ENCODE measurements at regions of chr16 and their contacts with region 1.

Region 1: DNA sequence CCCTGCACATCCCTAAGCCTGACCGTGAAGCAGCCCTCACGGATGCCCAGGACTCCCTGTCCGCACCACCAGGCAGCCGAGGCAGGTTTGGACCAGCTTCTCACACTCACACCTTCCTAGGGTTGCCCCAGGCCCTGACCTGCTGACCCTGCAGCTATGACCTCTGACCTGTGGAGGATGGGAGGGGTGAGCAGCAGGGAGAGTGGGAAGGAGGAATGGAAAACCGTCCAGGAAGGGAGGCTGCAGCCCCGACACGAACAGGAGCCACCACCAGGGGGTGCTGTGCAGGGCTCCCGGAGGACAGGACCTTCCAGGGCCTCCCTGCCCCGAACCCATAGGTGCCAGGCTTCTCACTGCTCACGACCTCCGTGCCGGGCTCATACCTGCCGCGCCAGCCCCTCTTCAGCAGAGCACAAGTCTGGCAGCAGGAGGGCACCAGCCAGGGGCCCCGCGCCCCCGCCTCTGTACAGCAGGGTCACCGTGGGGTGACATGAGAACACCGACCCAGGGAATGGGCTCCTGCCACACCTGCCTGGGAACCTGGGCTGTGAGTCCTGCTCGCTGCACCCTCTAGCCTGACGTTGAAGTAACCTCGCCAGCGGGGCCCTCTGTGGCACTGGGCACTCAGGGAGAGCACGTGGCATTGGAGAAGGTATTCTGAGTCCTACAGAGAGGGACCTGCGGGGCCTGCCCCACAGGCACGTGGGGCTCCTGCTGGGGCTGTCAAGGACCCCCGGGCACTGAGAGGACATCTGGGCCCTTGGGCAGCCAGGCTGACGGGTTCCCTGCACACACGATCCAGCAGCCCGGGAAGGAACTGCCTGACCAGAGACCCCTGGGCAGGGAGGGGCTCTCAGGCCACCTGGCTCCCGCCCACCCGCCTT is 37.6 kb downstream of the CTU2 start:
- DNase-seq: peak; percentile 79
- ATAC-seq: peak; percentile 22
- H3K4me3 Mint-ChIP-seq: no peak overlapping the region
- H3K27ac Mint-ChIP-seq: no peak overlapping the region
- H3K4me1 Mint-ChIP-seq: peaks cover 24% of the 10 kb centered on the region
- H3K27me3 Mint-ChIP-seq: no peaks in the 10 kb centered on the region
- CTCF ChIP-seq: peak; percentile 95

Region 2: DNA sequence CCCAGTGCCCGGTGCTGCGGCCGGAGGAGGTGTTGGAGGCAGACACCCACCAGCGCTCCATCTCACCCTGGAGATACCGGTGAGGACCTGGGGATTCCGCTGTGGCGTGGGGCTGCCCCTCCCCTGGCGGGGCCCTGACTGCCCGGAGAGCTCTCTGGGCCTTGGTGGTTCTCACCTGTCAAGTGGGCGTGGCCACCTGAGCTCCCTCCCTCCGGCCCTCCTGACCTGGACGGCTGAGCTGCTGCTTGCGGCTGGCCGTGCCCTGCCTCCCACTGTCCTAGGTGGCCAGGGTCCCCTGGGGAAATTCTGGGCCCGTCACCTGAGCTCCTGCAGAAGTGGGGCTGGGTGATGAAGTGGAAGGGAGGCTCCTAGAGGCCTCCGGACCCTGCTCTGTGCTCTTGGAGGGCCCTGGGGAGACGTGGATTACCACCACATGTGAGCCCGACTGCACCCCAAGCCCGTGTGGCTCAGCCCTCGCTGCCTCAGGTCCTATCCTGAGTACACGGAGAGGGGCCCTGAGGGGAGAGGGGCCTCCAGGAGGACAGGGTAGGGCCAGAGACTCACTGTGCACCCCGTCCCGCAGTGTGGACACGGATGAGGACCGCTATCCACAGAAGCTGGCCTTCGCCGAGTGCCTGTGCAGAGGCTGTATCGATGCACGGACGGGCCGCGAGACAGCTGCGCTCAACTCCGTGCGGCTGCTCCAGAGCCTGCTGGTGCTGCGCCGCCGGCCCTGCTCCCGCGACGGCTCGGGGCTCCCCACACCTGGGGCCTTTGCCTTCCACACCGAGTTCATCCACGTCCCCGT is 104.5 kb before region 1 on chr16:
- CTCF ChIA-PET with region 1: no interaction called
- POLR2A ChIA-PET with region 1: no interaction called
- intact Hi-C with region 1: no loop called
- DNase-seq: peak; percentile 31
- ATAC-seq: no peak
- H3K4me3 Mint-ChIP-seq: no peak overlapping the region
- H3K27ac Mint-ChIP-seq: no peak overlapping the region
- H3K4me1 Mint-ChIP-seq: peaks cover 33% of the 10 kb centered on the region
- H3K27me3 Mint-ChIP-seq: peaks cover 20% of the 10 kb centered on the region
- CTCF ChIP-seq: no peak

Region 3: DNA sequence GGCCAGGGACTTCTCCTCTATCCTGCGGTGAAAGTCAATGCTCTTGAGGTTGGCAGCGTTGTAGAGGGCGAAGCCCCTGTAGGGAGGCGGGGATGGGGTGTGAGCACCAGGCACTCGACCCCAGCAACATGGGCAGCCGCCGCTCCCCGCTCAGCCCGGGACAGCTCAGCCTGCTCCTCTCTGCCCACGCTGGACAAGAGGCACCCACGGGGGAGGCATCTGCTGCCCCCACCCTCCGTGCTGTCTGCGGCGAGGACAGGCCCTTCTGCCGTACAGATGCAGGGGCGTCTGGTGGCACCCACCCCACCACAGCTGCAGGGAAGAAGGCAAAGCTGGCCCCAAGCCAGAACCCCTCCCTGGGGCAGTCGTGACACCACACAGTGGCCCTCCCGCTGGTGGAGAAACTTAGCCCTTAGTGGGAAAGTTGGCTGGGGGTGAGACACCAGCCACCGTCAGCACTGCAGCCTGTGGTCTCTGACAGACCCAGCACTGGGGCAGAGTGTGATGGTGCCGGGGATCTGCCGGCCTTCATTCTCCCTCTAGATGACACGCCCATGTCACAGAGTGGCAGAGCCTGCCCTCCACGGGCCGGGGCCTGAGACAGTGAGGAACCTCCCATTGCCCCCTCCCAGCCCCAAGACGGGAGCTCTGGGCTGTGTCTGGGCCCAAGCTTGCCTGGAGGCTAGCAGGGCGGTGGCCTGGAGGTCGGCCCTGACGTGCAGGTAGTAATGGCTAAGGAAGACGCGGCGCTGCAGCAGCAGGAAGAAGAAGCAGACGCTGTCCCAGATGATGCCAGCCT is 18.1 kb before region 1 on chr16:
- CTCF ChIA-PET with region 1: no interaction called
- POLR2A ChIA-PET with region 1: no interaction called
- intact Hi-C with region 1: no loop called
- DNase-seq: no peak
- ATAC-seq: no peak
- H3K4me3 Mint-ChIP-seq: no peak overlapping the region
- H3K27ac Mint-ChIP-seq: no peak overlapping the region
- H3K4me1 Mint-ChIP-seq: no peaks in the 10 kb centered on the region
- H3K27me3 Mint-ChIP-seq: no peaks in the 10 kb centered on the region
- CTCF ChIP-seq: no peak

Region 4: DNA sequence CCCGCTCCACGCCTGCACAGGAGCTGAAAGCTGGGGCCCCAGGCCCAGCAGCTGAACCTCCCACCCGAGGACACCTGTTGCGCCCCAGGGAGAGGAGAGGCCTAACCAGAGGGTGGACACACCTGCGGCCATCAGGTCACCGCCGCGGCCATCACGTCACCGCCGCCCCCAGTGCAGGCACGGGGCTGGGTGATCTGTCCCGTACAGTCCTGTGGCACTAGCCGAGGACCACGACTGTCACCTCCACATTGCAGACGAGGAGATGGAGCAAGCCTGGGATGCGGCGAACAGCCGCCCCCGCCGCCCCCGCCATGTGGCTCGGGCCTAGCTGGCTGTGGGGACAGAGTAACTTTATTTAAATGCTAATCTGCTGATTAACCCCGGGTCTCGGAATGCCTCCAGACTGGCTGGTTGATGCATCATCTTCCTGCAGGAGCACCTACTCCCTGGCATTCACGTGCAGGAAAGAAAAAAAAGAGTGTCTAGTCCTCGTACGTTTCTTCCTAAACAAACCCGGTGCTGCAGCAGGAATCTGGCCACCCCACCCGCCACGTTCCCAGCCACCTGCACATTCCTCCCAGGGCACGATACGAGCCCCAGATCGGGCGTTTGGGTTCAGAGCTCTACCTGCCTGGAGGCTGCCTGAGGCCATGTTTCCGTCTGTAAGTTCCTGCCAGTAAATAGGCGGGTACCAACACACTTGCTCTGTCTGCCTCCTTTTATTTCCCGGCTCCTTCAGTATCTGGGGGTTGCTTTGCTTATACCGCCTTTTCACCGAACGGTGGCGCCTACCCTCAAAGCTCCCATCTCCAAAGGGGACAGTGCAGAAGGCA is 11.2 kb after region 1 on chr16:
- CTCF ChIA-PET with region 1: interaction called, 10 read pairs
- POLR2A ChIA-PET with region 1: interaction called, 3 read pairs
- intact Hi-C with region 1: no loop called
- DNase-seq: peak; percentile 35
- ATAC-seq: peak; percentile 72
- H3K4me3 Mint-ChIP-seq: no peak overlapping the region
- H3K27ac Mint-ChIP-seq: no peak overlapping the region
- H3K4me1 Mint-ChIP-seq: peaks cover 14% of the 10 kb centered on the region
- H3K27me3 Mint-ChIP-seq: no peaks in the 10 kb centered on the region
- CTCF ChIP-seq: peak; percentile 17

Region 5: GRCh38 chr16:88803264-88803987 is 59.5 kb after region 1 on chr16 and contains the start of gene CDT1:
- CTCF ChIA-PET with region 1: no interaction called
- POLR2A ChIA-PET with region 1: no interaction called
- intact Hi-C with region 1: loop called (anchors 5 kb)
- DNase-seq: peak; percentile 76
- ATAC-seq: peak; percentile 57
- H3K4me3 Mint-ChIP-seq: peak within 1 kb of the TSS; percentile 81
- H3K27ac Mint-ChIP-seq: peak within 1 kb of the TSS; percentile 89
- H3K4me1 Mint-ChIP-seq: peaks cover 14% of the 10 kb centered on the region
- H3K27me3 Mint-ChIP-seq: no peaks in the 10 kb centered on the region
- CTCF ChIP-seq: no peak
- total RNA-seq, gene CDT1: 180 to 182 TPM

Region 6: GRCh38 chr16:88844419-88845036 is 100.6 kb after region 1 on chr16:
- CTCF ChIA-PET with region 1: no interaction called
- POLR2A ChIA-PET with region 1: no interaction called
- intact Hi-C with region 1: no loop called
- DNase-seq: no peak
- ATAC-seq: no peak
- H3K4me3 Mint-ChIP-seq: no peak overlapping the region
- H3K27ac Mint-ChIP-seq: no peak overlapping the region
- H3K4me1 Mint-ChIP-seq: no peaks in the 10 kb centered on the region
- H3K27me3 Mint-ChIP-seq: no peaks in the 10 kb centered on the region
- CTCF ChIP-seq: no peak